ENCODE measurements at regions of chr14 and their contacts with region 1.

Region 1: DNA sequence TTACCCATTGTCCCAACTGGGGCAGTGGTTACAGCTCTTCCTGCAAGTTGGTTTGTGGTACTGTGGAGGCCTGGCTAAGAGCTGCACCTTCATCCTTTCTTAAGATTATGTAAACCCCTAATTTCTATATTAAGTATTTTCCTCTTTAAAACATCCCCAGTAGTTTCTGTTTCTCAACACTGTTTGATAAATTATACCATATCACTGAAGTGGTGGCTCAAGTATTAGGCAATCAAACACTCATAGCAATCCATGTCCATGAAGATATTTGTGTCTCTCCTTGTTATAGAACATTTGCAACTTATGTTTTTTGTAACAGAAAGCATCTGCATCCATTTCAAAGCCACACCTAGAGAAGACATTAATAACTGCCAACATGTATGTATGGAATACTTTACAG is 31.8 kb downstream of the ATXN3 start:
- DNase-seq: no peak
- H3K4me3 ChIP-seq: no peak overlapping the region
- H3K27me3 ChIP-seq: no peaks in the 10 kb centered on the region
- CTCF ChIP-seq: no peak

Region 2: GRCh38 chr14:91264151-91265150 is 810.1 kb before region 1 on chr14:
- CTCF ChIA-PET with region 1: no interaction called
- POLR2A ChIA-PET with region 1: interaction called, 10 read pairs
- DNase-seq: no peak
- H3K4me3 ChIP-seq: peak overlapping the region; percentile 29
- H3K27me3 ChIP-seq: peaks cover 4% of the 10 kb centered on the region
- CTCF ChIP-seq: no peak

Region 3: DNA sequence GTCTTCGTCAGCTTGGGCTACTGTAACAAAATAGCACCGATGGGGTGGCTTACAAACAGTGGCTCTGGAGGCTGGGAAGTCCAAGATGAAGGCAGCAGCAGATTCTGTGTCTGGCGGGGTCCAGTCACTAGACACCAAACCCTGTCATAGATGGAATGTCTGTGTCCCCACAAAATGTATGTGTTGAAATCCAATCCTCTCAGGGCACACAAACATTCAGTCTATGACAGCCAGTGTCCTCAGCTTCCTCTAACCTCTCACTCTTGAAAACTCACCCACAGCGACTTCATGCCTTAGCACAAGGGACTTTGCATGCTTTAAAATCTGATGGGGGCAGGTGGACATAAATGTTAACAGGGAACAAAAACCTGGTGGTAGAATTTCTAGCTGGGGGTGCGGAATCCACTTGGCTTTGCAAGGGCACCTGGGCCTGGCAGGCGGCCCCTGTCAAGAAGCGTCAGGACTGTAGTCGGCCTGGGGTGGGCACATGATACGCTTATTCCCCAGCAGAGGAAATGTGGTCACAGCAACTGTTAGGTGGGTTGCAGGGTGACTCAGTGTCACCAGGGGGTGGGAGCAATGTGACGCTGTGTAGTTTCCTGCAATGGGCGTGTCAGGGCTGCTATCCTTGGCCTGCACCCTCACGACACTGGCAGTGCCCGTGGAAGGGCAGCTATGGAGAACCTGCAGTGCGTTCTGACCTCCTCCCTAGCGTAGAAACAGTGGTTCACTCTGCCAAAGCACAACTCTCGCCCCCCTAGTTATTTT is 456.7 kb after region 1 on chr14:
- CTCF ChIA-PET with region 1: no interaction called
- POLR2A ChIA-PET with region 1: no interaction called
- DNase-seq: no peak
- H3K4me3 ChIP-seq: no peak overlapping the region
- H3K27me3 ChIP-seq: no peaks in the 10 kb centered on the region
- CTCF ChIP-seq: no peak

Measured in BJ (cell line).